Right ventricle myocardium superior (tissue), 1 donor: ENCODE measurements at regions of chr19 and their contacts with region 1.

Region 1: DNA sequence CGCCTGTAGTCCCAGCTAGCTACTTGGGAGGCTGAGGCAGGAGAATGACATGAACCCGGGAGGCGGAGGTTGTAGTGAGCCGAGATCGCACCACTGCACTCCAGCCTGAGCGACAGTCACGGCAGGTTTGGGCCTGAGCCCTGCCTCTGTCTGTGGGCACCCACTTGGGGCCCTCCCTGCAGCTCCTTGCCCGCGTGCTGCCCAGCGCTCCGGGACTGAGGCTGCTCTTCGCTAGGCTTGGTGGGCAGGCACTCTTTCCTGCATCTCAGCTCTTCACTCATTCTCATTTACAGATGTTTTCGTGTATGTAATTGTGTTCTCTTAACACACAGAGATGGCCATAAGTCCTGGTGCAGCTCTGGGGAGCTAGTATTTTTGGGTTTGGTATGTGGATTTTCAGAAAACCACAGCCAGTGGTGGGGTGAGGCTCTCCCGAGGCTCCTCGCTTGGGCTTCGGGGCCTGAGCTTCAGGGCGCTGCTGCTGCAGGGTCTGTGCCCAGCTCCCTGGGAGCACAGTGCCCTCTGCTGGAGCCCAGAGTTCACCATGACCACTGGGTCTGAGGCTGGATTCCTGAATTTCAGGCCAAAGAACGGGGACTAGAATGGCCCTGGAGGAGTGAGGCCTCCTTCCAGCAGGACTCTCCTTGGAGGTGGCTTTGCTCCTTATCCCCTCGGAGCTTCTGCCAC is 15.2 kb downstream of the UPF1 start:
- DNase-seq: peak; percentile 90
- ATAC-seq: peak; percentile 85

Region 2: DNA sequence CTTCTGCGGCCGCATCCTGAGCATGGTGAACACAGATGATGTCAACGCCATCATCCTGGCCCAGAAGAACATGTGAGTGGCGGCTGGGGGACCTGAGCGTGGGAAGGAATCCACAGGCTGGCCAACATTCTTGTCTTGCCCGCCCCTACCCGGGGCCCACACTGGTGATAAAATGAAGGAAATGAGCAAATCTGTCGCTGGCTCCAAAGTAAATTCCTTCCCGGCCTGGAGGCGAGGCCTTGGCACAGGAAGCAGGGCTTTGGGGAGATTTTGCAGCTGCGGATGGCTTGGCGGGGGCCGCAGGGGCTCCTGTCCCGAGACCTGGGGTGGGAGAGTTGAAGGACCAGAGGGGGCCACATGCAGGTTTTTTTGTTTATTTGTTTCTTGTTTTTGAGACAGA is 284.9 kb before region 1 on chr19:
- intact Hi-C with region 1: no loop called
- DNase-seq: peak; percentile 60
- ATAC-seq: peak; percentile 2

Region 3: DNA sequence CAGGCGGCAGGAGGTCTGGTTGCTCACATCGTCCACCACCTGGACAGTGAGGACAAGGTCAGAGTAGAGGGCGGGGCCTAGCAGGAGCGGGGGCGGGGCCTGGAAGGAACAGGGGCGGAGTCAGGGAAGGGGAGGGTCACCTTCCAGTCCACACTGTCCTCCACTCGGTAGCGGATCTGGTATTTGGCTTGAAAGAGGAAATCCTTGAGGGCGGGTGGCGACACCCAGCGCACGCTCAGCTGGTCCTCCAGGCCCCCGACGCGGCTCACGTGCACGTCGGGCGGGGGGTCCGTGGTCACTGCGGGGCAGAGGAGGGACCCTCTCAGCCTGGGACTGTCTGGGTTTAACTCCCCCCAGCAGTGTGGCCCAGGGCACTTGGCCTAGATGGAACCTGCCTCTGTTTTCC is 250.2 kb before region 1 on chr19:
- intact Hi-C with region 1: loop called (anchors 5 kb)
- DNase-seq: peak; percentile 66
- ATAC-seq: peak; percentile 45

Region 4: GRCh38 chr19:18710996-18711751 is 135.8 kb before region 1 on chr19:
- intact Hi-C with region 1: no loop called
- DNase-seq: peak; percentile 81
- ATAC-seq: peak; percentile 65

Region 5: GRCh38 chr19:18895038-18895823 is 48.2 kb after region 1 on chr19:
- intact Hi-C with region 1: no loop called
- DNase-seq: peak; percentile 62
- ATAC-seq: peak; percentile 45